Activated T-helper 2 cell treated with anti-CD3 and anti-CD28 coated beads, Interferon-gamma antibody, Interleukin-2, Interleukin-4, amounts not matched to agents 10 μg/mL and 5 μg/mL and 100 μg/mL, durations not matched to agents 14 hours and 24 hours and 36 hours (primary cell): ENCODE measurements at regions of chr11 and their contacts with region 1.

Region 1: DNA sequence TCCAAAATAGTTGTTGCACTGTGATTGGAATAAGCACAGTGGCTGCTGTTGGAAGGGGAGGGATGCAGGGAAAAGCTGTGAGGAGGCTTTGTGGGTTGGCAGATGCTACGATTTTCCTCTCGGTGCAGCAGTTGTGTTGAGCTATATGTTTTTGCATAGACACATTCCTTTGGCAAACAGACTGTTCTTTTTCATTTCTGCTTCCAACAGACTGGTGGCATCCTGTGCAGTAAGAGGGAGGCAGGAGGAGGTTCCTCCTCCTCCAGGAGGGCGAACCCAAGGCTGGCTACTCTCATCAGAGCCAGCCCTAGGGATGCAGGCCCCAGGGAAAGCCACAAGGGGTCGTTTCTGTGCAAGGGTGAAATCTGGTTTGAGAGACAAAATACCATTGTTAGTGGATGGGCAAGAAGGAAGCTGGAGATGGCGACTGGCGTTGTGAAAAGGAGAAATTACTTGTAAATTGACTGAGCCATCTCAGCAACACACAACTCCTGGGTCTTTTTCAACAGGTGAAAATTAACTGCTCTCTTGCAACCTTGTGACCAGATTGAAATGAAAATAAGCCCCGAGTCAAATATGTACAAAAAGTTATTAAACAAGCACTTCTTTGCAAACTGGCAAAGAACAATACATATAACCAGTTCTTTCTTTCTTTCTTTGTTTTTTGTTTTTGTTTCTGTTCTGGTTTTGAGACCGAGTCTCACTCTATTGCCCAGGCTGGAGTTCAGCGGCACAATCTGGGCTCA is 26.5 kb upstream of the UBASH3B start:
- DNase-seq: peak; percentile 53
- H3K4me3 Mint-ChIP-seq: no peak overlapping the region
- H3K27ac Mint-ChIP-seq: no peak overlapping the region
- H3K4me1 Mint-ChIP-seq: peaks cover 3% of the 10 kb centered on the region
- H3K27me3 Mint-ChIP-seq: peaks cover 3% of the 10 kb centered on the region

Region 2: GRCh38 chr11:122584670-122585069 is 44.3 kb before region 1 on chr11:
- intact Hi-C with region 1: loop called (anchors 5 kb)
- DNase-seq: no peak
- H3K4me3 Mint-ChIP-seq: no peak overlapping the region
- H3K27ac Mint-ChIP-seq: no peak overlapping the region
- H3K4me1 Mint-ChIP-seq: peaks cover 11% of the 10 kb centered on the region
- H3K27me3 Mint-ChIP-seq: no peaks in the 10 kb centered on the region

Region 3: GRCh38 chr11:122717264-122717867 is 88.4 kb after region 1 on chr11:
- intact Hi-C with region 1: no loop called
- DNase-seq: peak; percentile 23
- H3K4me3 Mint-ChIP-seq: no peak overlapping the region
- H3K27ac Mint-ChIP-seq: peak overlapping the region; percentile 8
- H3K4me1 Mint-ChIP-seq: peaks cover 37% of the 10 kb centered on the region
- H3K27me3 Mint-ChIP-seq: peaks cover 13% of the 10 kb centered on the region

Region 4: DNA sequence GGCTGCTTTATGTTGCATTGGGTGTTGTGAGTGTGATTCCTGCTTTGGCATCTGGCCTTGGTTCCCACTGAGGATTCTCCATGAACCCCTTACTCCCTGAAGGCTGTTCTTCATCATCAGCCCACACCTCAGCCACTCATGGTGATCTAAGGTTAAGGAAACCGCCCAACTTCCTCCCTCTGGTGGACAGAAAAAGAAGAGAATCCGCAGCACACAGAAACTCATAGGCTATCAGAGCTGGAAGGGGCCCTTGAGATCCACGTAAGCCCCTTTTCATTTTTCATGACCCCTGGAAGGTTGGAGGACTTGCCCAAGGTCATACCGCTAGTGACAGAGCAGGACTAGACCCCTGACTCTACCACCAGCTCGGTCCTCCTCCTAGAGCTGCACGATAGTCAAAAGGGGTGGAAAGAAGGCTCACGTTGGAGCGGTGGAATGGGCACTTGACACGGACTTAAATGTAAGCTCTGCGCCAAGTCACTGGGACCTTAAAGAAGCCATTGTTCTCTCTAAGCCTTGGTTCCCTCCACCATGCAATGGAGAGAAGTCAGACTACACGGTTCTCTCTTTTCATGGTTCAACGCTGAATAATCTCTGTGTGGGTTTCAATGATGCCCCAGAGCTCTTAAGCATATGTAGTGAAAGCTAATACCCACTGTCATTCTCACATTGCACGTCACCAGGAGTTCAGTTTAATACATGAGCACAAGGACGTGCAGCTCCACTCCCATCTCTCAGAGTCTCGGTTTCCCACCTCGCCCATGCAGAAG is 125.8 kb after region 1 on chr11:
- intact Hi-C with region 1: loop called (anchors 1 kb)
- DNase-seq: peak; percentile 21
- H3K4me3 Mint-ChIP-seq: no peak overlapping the region
- H3K27ac Mint-ChIP-seq: no peak overlapping the region
- H3K4me1 Mint-ChIP-seq: peaks cover 44% of the 10 kb centered on the region
- H3K27me3 Mint-ChIP-seq: peaks cover 7% of the 10 kb centered on the region

Region 5: GRCh38 chr11:122781378-122782195 is 152.6 kb after region 1 on chr11:
- intact Hi-C with region 1: loop called (anchors 1 kb)
- DNase-seq: peak; percentile 52
- H3K4me3 Mint-ChIP-seq: no peak overlapping the region
- H3K27ac Mint-ChIP-seq: no peak overlapping the region
- H3K4me1 Mint-ChIP-seq: peaks cover 6% of the 10 kb centered on the region
- H3K27me3 Mint-ChIP-seq: no peaks in the 10 kb centered on the region